ENCODE measurements at regions of chr6 and their contacts with region 1.

Region 1: GRCh38 chr6:12419631-12420272 is 129.6 kb downstream of the EDN1 start:
- DNase-seq: no peak
- ATAC-seq: no peak
- H3K4me3 ChIP-seq: no peak overlapping the region
- H3K27ac ChIP-seq: no peak overlapping the region; the same call in 1 of the 2 replicates
- H3K4me1 ChIP-seq: peaks cover 2% of the 10 kb centered on the region; the same call in 1 of the 2 replicates
- H3K27me3 ChIP-seq: no peaks in the 10 kb centered on the region
- CTCF ChIP-seq: no peak

Region 2: DNA sequence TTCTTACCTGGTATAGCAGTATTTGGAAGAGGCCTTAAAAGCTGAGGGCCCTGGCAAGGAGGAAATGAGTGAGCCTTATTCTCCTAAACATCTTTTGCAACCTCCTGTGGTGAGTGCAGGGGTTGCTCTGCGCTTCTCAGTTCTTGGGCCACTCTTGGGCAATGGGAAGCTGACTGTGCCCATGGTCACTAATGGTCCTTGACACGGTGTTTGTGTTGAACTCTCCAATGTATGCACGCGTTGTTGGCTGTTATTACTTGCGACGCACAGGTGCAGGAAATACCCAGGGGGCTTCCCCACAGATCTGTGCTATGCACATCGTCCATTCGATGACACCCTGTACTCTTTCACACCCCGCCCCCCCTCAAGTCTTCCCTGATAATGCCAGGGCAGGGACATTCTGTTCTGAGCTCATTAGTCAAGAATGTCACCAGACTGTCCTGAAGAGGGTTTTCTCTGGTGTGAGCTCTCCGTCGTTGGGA is 49.9 kb before region 1 on chr6:
- CTCF ChIA-PET with region 1: no interaction called
- POLR2A ChIA-PET with region 1: interaction called, 10 read pairs
- in situ Hi-C with region 1: no loop called
- intact Hi-C with region 1: no loop called
- DNase-seq: no peak
- ATAC-seq: no peak
- H3K4me3 ChIP-seq: no peak overlapping the region
- H3K27ac ChIP-seq: no peak overlapping the region; the same call in 1 of the 2 replicates
- H3K4me1 ChIP-seq: peaks cover 9% of the 10 kb centered on the region
- H3K27me3 ChIP-seq: no peaks in the 10 kb centered on the region
- CTCF ChIP-seq: no peak